ENCODE measurements at regions of chr6 and their contacts with region 1.

Region 1: DNA sequence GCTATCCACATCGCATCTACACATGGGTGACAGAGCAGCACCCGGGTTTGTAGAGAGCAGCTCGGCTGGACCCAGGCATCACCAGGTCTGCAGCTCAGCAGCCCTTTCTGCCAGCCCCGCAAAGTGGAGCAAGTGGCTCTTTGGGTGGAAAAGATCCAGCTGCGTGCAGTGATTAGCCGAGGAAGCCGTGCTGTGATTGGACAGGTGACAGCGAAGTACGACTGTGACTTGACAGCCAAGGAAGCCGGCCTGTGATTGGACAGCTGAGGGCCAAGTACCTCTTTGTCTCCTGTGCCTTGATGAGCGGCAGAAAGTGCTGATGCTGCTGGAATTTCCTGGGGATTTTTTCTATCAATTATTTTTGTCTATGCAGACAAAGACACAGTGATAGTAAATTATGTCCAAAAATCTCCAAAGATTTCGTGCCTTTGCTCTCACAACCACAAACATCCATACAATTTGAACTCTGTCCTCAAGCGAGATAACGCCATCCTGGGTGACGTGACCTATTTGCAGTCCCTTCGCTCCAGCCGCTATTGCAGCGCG is 62.3 kb upstream of the GPR31 start:
- DNase-seq: no peak
- ATAC-seq: no peak
- H3K4me3 Mint-ChIP-seq: no peak overlapping the region
- H3K27ac Mint-ChIP-seq: no peak overlapping the region
- H3K4me1 Mint-ChIP-seq: no peaks in the 10 kb centered on the region
- H3K27me3 Mint-ChIP-seq: no peaks in the 10 kb centered on the region
- CTCF ChIP-seq: no peak

Region 2: DNA sequence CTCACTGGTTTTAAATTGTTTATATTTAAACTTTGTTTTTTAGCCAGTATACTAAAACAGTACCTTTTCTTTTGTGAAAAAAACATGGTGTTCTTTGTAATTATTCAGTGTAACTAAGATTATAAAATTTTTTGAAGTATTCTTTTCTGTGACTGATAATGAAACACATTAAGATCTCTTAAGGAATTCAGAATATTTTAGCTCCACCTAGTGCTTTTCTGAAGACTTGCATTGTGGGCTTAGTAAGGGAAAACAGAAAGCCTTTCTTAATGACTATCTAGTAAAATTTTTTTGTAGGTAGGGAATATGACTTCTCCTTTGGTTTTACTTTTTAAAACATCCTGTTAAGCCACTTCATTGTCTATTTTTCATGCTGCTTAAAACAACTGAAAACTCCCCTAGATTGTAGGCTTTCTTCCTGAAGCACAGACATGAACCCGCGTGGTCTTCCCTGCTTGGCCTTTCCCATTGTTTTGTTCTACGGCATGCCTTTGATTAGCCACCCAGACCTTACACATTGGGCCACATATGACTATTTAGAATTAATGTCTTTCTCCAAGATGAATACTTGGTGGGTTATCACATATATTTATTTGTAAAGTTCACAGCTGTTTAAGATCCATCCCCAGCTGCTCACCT is 678.8 kb after region 1 on chr6:
- CTCF ChIA-PET with region 1: no interaction called
- POLR2A ChIA-PET with region 1: no interaction called
- intact Hi-C with region 1: loop called (anchors 2 kb)
- DNase-seq: no peak
- ATAC-seq: no peak
- H3K4me3 Mint-ChIP-seq: no peak overlapping the region
- H3K27ac Mint-ChIP-seq: no peak overlapping the region
- H3K4me1 Mint-ChIP-seq: no peaks in the 10 kb centered on the region
- H3K27me3 Mint-ChIP-seq: no peaks in the 10 kb centered on the region
- CTCF ChIP-seq: no peak

Region 3: GRCh38 chr6:168884646-168885086 is 1664.6 kb after region 1 on chr6:
- CTCF ChIA-PET with region 1: no interaction called
- POLR2A ChIA-PET with region 1: no interaction called
- intact Hi-C with region 1: loop called (anchors 5 kb)
- DNase-seq: peak; percentile 65
- ATAC-seq: peak; percentile 86
- H3K4me3 Mint-ChIP-seq: peak overlapping the region; percentile 84
- H3K27ac Mint-ChIP-seq: peak overlapping the region; percentile 66
- H3K4me1 Mint-ChIP-seq: peaks cover 7% of the 10 kb centered on the region
- H3K27me3 Mint-ChIP-seq: peaks cover 3% of the 10 kb centered on the region
- CTCF ChIP-seq: peak; percentile 41

Measured in activated B cell treated with CpG ODN at 0.5 μM for 24 hours (primary cell).